Activated T-helper 2 cell treated with anti-CD3 and anti-CD28 coated beads, Interferon-gamma antibody, Interleukin-2, Interleukin-4, amounts not matched to agents 10 μg/mL and 5 μg/mL and 100 μg/mL, durations not matched to agents 14 hours and 24 hours and 36 hours (primary cell): ENCODE measurements at regions of chr2 and their contacts with region 1.

Region 1: GRCh38 chr2:200454927-200455801 is 54.7 kb downstream of the KCTD18 start:
- DNase-seq: no peak
- H3K4me3 Mint-ChIP-seq: no peak overlapping the region
- H3K27ac Mint-ChIP-seq: peak overlapping the region; percentile 61
- H3K4me1 Mint-ChIP-seq: peaks cover 33% of the 10 kb centered on the region
- H3K27me3 Mint-ChIP-seq: no peaks in the 10 kb centered on the region

Region 2: DNA sequence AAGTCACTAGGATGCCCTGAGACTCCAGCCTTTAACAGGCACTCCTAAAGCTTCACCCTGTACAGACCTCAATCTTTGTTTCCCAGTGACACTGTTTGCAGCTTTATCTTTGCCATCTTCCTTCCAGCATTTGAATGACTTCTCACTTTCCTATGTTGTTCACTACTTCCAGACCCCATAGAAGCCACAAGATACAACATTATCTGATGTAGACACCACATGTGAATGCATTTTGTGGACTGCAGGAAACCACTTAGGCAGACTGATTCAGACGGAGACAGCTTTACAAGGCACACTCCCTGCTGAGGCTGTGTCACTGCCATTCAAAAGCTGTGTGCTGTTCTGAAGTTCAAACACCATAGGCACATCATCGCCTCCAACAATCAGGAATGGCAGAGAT is 215.9 kb before region 1 on chr2:
- intact Hi-C with region 1: loop called (anchors 1 kb)
- DNase-seq: no peak
- H3K4me3 Mint-ChIP-seq: no peak overlapping the region
- H3K27ac Mint-ChIP-seq: no peak overlapping the region
- H3K4me1 Mint-ChIP-seq: peaks cover 5% of the 10 kb centered on the region
- H3K27me3 Mint-ChIP-seq: peaks cover 67% of the 10 kb centered on the region

Region 3: DNA sequence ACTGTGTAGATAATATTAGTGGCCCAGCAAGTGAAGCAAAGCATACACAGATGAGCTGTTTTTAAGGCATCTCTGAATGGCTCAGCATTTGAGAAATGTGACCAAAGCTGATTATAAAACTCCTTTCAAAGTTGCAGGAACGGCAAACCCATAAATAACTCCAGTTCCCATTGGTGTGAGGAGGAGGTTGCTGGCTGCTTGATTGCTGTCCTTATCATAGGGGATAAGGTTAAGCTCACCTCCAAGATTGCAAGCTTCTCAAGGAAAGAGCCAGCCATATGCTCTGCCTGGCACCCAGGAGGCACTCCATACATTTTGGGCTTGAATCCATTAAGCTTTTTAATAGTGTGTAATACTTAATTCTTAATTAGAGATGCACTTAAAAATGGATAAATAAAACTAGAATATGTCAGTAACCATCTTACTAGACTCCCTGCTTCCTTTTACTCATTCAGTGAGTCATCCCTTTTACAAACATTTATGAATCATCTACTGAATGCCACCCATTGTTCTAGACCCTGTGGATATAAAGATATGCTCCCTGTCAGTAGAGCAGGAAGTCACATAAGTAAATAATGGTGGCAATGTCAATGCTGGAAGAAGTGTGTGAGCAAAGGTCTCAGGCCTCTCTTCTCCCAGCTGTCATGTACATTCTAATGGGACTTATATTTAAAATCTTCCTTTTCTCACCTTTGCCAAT is 49.4 kb before region 1 on chr2:
- intact Hi-C with region 1: loop called (anchors 2 kb)
- DNase-seq: no peak
- H3K4me3 Mint-ChIP-seq: no peak overlapping the region
- H3K27ac Mint-ChIP-seq: peak overlapping the region; percentile 67
- H3K4me1 Mint-ChIP-seq: peaks cover 50% of the 10 kb centered on the region
- H3K27me3 Mint-ChIP-seq: no peaks in the 10 kb centered on the region

Region 4: GRCh38 chr2:200471324-200471848 is 16.2 kb after region 1 on chr2:
- intact Hi-C with region 1: loop called (anchors 1 kb)
- DNase-seq: no peak
- H3K4me3 Mint-ChIP-seq: no peak overlapping the region
- H3K27ac Mint-ChIP-seq: peak overlapping the region; percentile 75
- H3K4me1 Mint-ChIP-seq: peaks cover 32% of the 10 kb centered on the region
- H3K27me3 Mint-ChIP-seq: no peaks in the 10 kb centered on the region

Region 5: GRCh38 chr2:202014759-202015211 is 1559.6 kb after region 1 on chr2:
- intact Hi-C with region 1: no loop called
- DNase-seq: no peak
- H3K4me3 Mint-ChIP-seq: no peak overlapping the region
- H3K27ac Mint-ChIP-seq: no peak overlapping the region
- H3K4me1 Mint-ChIP-seq: no peaks in the 10 kb centered on the region
- H3K27me3 Mint-ChIP-seq: peaks cover 14% of the 10 kb centered on the region